Dorsolateral prefrontal cortex (tissue), 120 donors: ENCODE measurements at regions of chr9 and their contacts with region 1.

Region 1: DNA sequence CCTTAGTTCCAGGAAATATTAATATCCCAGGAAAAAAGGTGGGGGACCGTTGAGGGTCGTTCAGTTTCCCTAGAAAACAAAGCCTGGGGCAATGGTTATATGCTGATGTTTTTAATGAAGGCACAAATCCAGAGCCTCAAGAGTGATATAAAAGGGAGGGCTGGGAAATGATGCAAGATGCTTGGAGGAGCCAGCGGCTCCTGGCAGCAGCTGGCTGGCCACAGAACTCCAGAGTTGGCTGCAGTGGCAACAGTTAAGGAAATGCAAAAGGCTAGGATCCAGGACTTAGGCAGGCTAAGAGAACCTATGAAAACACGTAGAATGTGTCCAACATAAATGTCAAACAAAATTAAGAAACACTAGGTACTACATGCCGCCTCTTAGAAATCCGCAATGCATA is 31.0 kb upstream of the B4GALT1 start:
- DNase-seq: no peak
- H3K4me3 ChIP-seq: no peak overlapping the region
- H3K27ac ChIP-seq: no peak overlapping the region
- H3K27me3 ChIP-seq: no peaks in the 10 kb centered on the region
- CTCF ChIP-seq: no peak

Region 2: GRCh38 chr9:33130508-33130911 is 67.7 kb before region 1 on chr9:
- intact Hi-C with region 1: loop called in 1 of 2 experiments (anchors 10 kb)
- DNase-seq: no peak
- H3K4me3 ChIP-seq: no peak overlapping the region
- H3K27ac ChIP-seq: peak overlapping the region in 4 of 59 donors; percentile 20 to 53 (median 24)
- H3K27me3 ChIP-seq: no peaks in the 10 kb centered on the region
- CTCF ChIP-seq: no peak